CD4-positive, alpha-beta T cell (primary cell): ENCODE measurements at regions of chr10 and their contacts with region 1.

Region 1: GRCh38 chr10:118341791-118342637 is at the start of gene FAM204A:
- DNase-seq: peak; percentile 92 to 99 (median 95)
- ATAC-seq: peak; percentile 96
- H3K4me3 ChIP-seq: peak within 1 kb of the TSS; percentile 98
- H3K4me3 Mint-ChIP-seq: peak within 1 kb of the TSS; percentile 99
- H3K27ac ChIP-seq: peak within 1 kb of the TSS; percentile 36 to 58
- H3K27ac Mint-ChIP-seq: peak within 1 kb of the TSS; percentile 88
- H3K4me1 ChIP-seq: peaks cover 21% of the 10 kb centered on the region
- H3K4me1 Mint-ChIP-seq: peaks cover 58% of the 10 kb centered on the region
- H3K27me3 ChIP-seq: no peaks in the 10 kb centered on the region
- H3K27me3 Mint-ChIP-seq: no peaks in the 10 kb centered on the region
- CTCF ChIP-seq: no peak
- total RNA-seq, gene FAM204A: 47.3 to 54.7 TPM

Region 2: GRCh38 chr10:117375360-117376178 is 966.4 kb before region 1 on chr10 and contains the start of gene PDZD8:
- CTCF ChIA-PET with region 1: no interaction called
- POLR2A ChIA-PET with region 1: no interaction called
- intact Hi-C with region 1: loop called in 1 of 2 experiments (anchors 5 kb)
- DNase-seq: peak; percentile 81 to 96 (median 92)
- ATAC-seq: peak; percentile 78
- H3K4me3 ChIP-seq: peak within 1 kb of the TSS; percentile 94
- H3K4me3 Mint-ChIP-seq: peak within 1 kb of the TSS; percentile 95
- H3K27ac ChIP-seq: peak within 1 kb of the TSS; percentile 55 to 59
- H3K27ac Mint-ChIP-seq: peak within 1 kb of the TSS; percentile 88
- H3K4me1 ChIP-seq: peaks cover 38% of the 10 kb centered on the region
- H3K4me1 Mint-ChIP-seq: peaks cover 40% of the 10 kb centered on the region
- H3K27me3 ChIP-seq: peaks cover 0 to 3% of the 10 kb centered on the region in 2 experiments
- H3K27me3 Mint-ChIP-seq: peaks cover 28% of the 10 kb centered on the region
- CTCF ChIP-seq: no peak
- total RNA-seq, gene PDZD8: 25.2 to 31.1 TPM

Region 3: DNA sequence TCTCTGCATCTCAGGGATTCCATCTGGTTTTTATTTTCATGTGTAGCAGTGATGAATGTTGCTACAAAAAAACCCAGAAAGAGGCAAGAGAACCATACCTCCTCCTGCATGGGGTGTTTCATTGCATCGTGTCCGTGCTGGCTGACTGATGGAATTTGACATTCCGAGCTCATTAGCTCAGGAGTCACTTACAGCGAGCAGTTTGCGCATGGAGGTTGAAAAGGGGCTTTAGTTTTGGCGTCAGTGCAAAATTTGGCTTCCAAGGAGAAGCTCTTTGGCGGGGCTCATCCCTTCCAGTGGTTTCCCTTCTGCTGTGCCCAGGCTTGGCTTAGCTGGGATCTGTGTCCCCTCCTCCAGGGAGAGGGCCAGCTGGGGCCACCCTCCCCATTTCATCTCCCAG is 773.7 kb before region 1 on chr10:
- CTCF ChIA-PET with region 1: no interaction called
- POLR2A ChIA-PET with region 1: no interaction called
- intact Hi-C with region 1: no loop called
- DNase-seq: no peak
- ATAC-seq: no peak
- H3K4me3 ChIP-seq: no peak overlapping the region
- H3K4me3 Mint-ChIP-seq: no peak overlapping the region
- H3K27ac ChIP-seq: no peak overlapping the region
- H3K27ac Mint-ChIP-seq: no peak overlapping the region
- H3K4me1 ChIP-seq: no peaks in the 10 kb centered on the region
- H3K4me1 Mint-ChIP-seq: no peaks in the 10 kb centered on the region
- H3K27me3 ChIP-seq: peaks cover 0 to 2% of the 10 kb centered on the region in 2 experiments
- H3K27me3 Mint-ChIP-seq: peaks cover 52% of the 10 kb centered on the region
- CTCF ChIP-seq: no peak

Region 4: DNA sequence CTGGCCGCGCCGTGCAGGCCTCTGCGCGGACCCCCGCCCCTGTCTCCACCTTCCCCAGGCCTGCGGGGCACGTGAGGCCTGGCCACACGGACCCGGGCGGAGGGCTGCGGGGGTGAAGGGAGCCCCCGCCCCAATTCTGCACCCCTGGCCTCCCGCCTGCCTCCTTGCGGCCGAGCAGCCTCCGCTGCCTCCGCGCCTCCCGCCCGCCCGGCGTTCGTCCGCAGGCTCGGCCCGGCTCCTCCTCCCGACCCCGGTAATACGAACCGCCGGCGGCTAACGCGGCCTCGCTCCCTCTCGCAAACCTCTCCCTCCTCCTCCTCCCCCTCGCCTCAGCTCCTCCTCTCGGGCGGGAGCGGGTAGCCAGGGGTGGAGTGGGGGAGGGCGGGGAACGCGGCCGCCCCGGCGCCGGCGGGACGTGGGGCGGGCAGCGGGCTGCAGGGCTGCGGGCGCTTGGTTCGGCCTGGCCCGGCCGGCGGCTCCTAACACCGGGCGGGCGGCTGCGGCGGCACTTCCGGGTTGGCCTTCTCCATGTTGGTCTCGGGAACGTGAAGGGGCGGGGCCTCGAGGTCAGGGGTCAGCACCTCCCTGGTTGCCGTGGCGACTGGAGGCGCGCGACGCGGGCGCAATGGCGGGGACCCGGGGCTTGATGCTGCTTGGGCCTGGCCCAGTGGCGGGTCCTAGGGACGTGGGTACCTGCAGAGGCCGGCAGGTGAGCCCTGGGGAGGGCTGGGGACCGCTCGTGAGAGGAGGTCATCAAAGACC is 295.4 kb before region 1 on chr10 and contains the start of gene RAB11FIP2:
- CTCF ChIA-PET with region 1: no interaction called
- POLR2A ChIA-PET with region 1: no interaction called
- intact Hi-C with region 1: loop called (anchors 1 to 10 kb)
- DNase-seq: peak; percentile 91 to 98 (median 95)
- ATAC-seq: peak; percentile 93
- H3K4me3 ChIP-seq: peak within 1 kb of the TSS; percentile 79
- H3K4me3 Mint-ChIP-seq: peak within 1 kb of the TSS; percentile 94
- H3K27ac ChIP-seq: peak within 1 kb of the TSS in 1 of 2 donors; percentile 60
- H3K27ac Mint-ChIP-seq: peak within 1 kb of the TSS; percentile 79
- H3K4me1 ChIP-seq: peaks cover 13% of the 10 kb centered on the region
- H3K4me1 Mint-ChIP-seq: peaks cover 51% of the 10 kb centered on the region
- H3K27me3 ChIP-seq: no peaks in the 10 kb centered on the region
- H3K27me3 Mint-ChIP-seq: no peaks in the 10 kb centered on the region
- CTCF ChIP-seq: no peak
- total RNA-seq, gene RAB11FIP2: 35.6 to 37.7 TPM

Region 5: DNA sequence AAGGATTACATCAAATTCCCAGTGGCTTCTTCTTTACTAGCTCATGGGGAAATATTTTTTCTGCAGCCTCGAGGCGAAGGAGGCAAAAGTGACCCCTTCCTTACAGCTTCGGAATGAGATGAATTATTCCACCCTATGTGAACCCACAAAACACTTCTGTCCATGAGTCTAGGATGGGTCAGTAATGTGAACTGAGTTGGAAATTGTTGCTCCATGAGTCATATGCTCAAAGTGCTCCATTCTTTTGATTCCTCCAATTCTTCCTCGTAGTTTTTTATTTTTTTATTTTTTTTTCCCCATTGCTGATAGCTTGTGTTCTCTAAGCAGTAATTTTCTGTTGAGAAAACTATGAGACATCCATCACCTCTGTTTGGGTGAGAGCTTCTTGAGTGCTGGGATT is 31.8 kb after region 1 on chr10:
- CTCF ChIA-PET with region 1: no interaction called
- POLR2A ChIA-PET with region 1: no interaction called
- intact Hi-C with region 1: no loop called
- DNase-seq: no peak
- ATAC-seq: no peak
- H3K4me3 ChIP-seq: no peak overlapping the region
- H3K4me3 Mint-ChIP-seq: no peak overlapping the region
- H3K27ac ChIP-seq: no peak overlapping the region
- H3K27ac Mint-ChIP-seq: no peak overlapping the region
- H3K4me1 ChIP-seq: no peaks in the 10 kb centered on the region
- H3K4me1 Mint-ChIP-seq: no peaks in the 10 kb centered on the region
- H3K27me3 ChIP-seq: peaks cover 7 to 15% of the 10 kb centered on the region in 2 experiments
- H3K27me3 Mint-ChIP-seq: peaks cover 59% of the 10 kb centered on the region
- CTCF ChIP-seq: no peak

Region 6: GRCh38 chr10:118405928-118406327 is 63.9 kb after region 1 on chr10:
- CTCF ChIA-PET with region 1: no interaction called
- POLR2A ChIA-PET with region 1: no interaction called
- intact Hi-C with region 1: no loop called
- DNase-seq: no peak
- ATAC-seq: no peak
- H3K4me3 ChIP-seq: no peak overlapping the region
- H3K4me3 Mint-ChIP-seq: no peak overlapping the region
- H3K27ac ChIP-seq: no peak overlapping the region
- H3K27ac Mint-ChIP-seq: no peak overlapping the region
- H3K4me1 ChIP-seq: no peaks in the 10 kb centered on the region
- H3K4me1 Mint-ChIP-seq: no peaks in the 10 kb centered on the region
- H3K27me3 ChIP-seq: peaks cover 2 to 13% of the 10 kb centered on the region in 2 experiments
- H3K27me3 Mint-ChIP-seq: peaks cover 41% of the 10 kb centered on the region
- CTCF ChIP-seq: no peak

Region 7: DNA sequence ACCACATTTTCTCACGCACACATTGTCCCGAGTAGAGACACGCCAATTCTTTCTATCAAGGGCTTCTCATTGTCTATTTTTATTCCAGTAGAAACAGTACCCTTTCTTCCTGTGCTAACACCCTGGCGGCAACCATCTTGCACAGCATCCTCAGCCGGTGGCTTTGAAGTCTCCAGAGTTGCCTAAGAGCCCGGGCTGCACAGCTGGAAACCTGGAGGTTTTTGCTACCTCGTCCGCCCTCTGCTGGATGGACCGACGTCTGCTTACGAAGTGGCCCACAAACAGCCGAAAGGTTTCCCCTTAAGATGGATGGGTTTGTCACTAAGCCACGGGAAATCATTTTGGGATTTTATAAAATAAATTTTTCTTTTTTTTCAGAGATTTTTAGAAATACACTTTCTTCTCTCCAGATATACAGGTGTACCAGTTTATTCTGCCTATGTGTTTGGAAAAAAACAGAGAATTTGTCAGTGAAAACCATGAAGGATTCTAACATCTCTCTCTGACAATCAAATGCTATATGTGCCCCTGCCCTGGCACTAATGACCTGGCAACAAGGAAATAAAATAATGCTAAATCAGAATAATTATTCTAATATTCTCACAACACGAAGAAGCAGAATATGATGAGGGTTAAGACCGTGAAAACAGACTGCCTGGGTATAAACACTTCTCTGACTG is 81.9 kb after region 1 on chr10:
- CTCF ChIA-PET with region 1: interaction called, 3 read pairs
- POLR2A ChIA-PET with region 1: no interaction called
- intact Hi-C with region 1: loop called in 1 of 2 experiments (anchors 5 kb)
- DNase-seq: peak; percentile 28 to 78 (median 44)
- ATAC-seq: peak; percentile 92
- H3K4me3 ChIP-seq: no peak overlapping the region
- H3K4me3 Mint-ChIP-seq: no peak overlapping the region
- H3K27ac ChIP-seq: no peak overlapping the region
- H3K27ac Mint-ChIP-seq: no peak overlapping the region
- H3K4me1 ChIP-seq: peaks cover 3% of the 10 kb centered on the region
- H3K4me1 Mint-ChIP-seq: no peaks in the 10 kb centered on the region
- H3K27me3 ChIP-seq: peaks cover 0 to 9% of the 10 kb centered on the region in 2 experiments
- H3K27me3 Mint-ChIP-seq: peaks cover 22% of the 10 kb centered on the region
- CTCF ChIP-seq: peak; percentile 74

Region 8: GRCh38 chr10:118459726-118460193 is 117.7 kb after region 1 on chr10:
- CTCF ChIA-PET with region 1: interaction called, 5 read pairs
- POLR2A ChIA-PET with region 1: no interaction called
- intact Hi-C with region 1: loop called in 1 of 2 experiments (anchors 1 kb)
- DNase-seq: peak; percentile 17 to 65 (median 28)
- ATAC-seq: peak; percentile 51
- H3K4me3 ChIP-seq: peak overlapping the region; percentile 12
- H3K4me3 Mint-ChIP-seq: peak overlapping the region; percentile 66
- H3K27ac ChIP-seq: no peak overlapping the region
- H3K27ac Mint-ChIP-seq: no peak overlapping the region
- H3K4me1 ChIP-seq: peaks cover 3% of the 10 kb centered on the region
- H3K4me1 Mint-ChIP-seq: no peaks in the 10 kb centered on the region
- H3K27me3 ChIP-seq: peaks cover 3 to 8% of the 10 kb centered on the region in 2 experiments
- H3K27me3 Mint-ChIP-seq: peaks cover 53% of the 10 kb centered on the region
- CTCF ChIP-seq: peak; percentile 75

Region 9: DNA sequence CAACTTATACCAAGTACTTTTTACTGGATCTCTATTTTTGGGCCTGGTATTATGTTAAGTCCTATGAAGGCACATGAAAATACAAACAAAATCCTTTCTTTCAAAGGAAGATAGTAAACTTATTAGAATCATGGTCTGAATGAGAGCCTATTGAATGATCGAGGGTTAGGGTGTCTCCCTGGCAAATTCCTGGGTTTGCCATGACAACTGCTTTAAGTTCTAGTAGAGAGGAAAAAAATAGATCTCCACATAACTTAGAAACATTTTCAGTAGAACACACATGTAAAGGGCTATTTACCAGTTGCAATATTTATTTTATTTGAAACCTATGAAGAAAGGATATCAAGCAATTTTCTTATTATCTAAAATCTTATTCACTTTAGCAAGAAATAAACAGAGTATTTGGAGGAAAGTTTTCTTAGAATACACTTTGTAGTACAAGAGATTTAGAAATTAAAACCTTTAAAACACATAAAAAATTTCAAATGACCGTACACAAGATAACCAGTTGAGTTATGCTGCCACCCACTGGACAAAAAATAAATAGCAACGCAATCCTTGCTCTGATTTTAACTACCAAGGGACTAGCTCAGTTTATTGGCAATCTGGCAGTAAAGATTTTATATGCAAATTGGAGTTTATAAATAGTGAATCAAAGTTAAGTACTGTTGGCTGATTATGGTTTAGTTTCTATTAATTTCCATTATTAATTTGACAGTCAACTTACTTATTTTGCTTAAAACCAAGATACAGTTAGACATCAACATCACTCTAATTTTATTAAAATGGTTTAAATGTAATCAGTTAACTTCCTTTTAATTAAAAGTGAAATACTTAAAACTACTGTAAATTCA is 378.9 kb after region 1 on chr10:
- CTCF ChIA-PET with region 1: no interaction called
- POLR2A ChIA-PET with region 1: no interaction called
- intact Hi-C with region 1: loop called in 1 of 2 experiments (anchors 10 kb)
- DNase-seq: peak in 13 of 14 experiments; percentile 39 to 83 (median 59)
- ATAC-seq: peak; percentile 65
- H3K4me3 ChIP-seq: no peak overlapping the region
- H3K4me3 Mint-ChIP-seq: no peak overlapping the region
- H3K27ac ChIP-seq: no peak overlapping the region
- H3K27ac Mint-ChIP-seq: no peak overlapping the region
- H3K4me1 ChIP-seq: no peaks in the 10 kb centered on the region
- H3K4me1 Mint-ChIP-seq: peaks cover 21% of the 10 kb centered on the region
- H3K27me3 ChIP-seq: no peaks in the 10 kb centered on the region
- H3K27me3 Mint-ChIP-seq: no peaks in the 10 kb centered on the region
- CTCF ChIP-seq: peak; percentile 87